Dendritic cell treated with granulocyte-macrophage colony-stimulating factor and Interleukin-4, amounts not matched to agents 40 ng/mL and 50 ng/mL, for 4 days (primary cell): ENCODE measurements at regions of chr16 and their contacts with region 1.

Region 1: GRCh38 chr16:30761928-30762810 is at the starts of genes CFAP119 and RNF40:
- H3K4me3 Mint-ChIP-seq: peak within 1 kb of the TSS; percentile 90
- H3K27ac Mint-ChIP-seq: peak within 1 kb of the TSS; percentile 95
- H3K4me1 Mint-ChIP-seq: peaks cover 59% of the 10 kb centered on the region
- H3K27me3 Mint-ChIP-seq: no peaks in the 10 kb centered on the region

Region 2: DNA sequence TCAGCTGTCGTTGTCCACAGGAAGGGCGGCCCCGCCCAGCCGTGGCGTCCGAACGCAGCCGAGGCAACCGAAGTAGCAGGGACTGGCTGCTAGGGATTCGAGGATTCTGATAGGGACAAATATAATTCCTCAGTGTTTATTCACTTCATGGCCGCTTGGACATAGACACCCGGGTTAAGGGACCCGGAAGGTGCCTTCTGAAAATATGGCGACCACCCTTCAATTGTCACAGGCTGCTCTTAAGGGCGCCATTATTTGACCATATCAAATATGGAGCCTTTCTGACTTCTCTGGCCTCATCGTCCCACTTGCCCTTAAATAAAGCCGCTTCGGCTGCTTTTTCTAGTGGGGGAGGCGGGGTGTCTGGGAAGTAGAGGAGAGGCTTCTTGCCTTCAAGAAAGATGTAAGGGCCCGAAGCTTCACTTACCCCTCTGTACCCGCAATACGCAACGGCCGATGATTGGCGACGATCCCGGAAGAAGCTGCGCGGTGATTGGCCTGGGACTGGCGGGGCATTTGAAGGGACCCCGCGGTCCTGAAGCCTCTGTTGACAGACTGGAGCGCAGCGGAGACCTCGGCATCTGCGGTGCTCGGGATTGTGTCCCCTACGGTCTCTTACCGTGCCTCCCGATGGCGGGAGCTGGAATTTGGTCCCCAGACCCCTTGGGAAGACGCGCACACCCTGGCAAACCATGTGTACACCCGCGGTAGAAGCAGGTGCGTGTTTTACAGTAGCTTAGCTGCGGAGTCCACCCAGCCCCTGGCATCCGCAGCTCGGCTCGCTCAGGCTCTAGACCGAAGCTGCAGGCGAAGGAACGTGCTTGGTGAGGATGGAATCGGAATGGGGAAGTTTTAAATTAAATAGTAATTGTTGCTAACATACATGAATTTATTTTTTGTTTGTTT is 190.2 kb before region 1 on chr16 and contains the start of gene ZNF688:
- intact Hi-C with region 1: no loop called
- H3K4me3 Mint-ChIP-seq: peak within 1 kb of the TSS; percentile 88
- H3K27ac Mint-ChIP-seq: peak within 1 kb of the TSS; percentile 93
- H3K4me1 Mint-ChIP-seq: peaks cover 66% of the 10 kb centered on the region
- H3K27me3 Mint-ChIP-seq: no peaks in the 10 kb centered on the region

Region 3: GRCh38 chr16:30657866-30658730 is 104.1 kb before region 1 on chr16 and contains the start of gene FBRS:
- intact Hi-C with region 1: loop called (anchors 5 kb)
- H3K4me3 Mint-ChIP-seq: peak within 1 kb of the TSS; percentile 98
- H3K27ac Mint-ChIP-seq: peak within 1 kb of the TSS; percentile 100
- H3K4me1 Mint-ChIP-seq: peaks cover 66% of the 10 kb centered on the region
- H3K27me3 Mint-ChIP-seq: no peaks in the 10 kb centered on the region

Region 4: DNA sequence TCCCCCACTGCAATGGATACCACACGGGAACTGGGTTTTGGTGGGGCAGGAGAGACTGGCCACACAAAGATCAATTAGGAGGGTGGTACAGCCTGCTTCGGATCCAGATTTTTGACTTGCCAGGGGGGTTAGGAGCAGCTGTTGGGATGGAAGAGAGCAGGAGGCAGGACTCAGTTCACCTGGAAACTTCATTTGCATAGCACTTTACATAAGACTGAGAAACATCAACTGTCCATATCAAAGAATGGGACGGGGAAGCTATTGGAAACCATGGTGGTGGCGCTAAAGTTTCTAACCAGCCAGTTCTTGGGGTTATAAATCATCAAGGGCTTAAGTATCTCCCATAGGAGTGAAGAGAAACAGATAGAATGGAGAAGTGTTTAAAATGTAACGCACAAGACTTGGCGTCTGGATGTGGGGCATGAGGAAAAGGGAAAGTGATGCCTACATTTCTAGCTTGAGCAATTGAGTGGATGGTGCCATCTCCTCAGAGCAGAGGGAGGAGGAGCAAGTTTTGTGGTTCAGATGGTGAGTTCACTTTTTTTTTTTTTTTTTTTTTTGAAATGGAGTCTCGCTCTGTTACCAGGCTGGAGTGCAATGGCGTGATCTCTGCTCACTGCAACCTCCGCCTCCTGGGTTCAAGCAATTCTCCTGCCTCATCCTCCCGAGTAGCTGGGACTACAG is 69.6 kb before region 1 on chr16:
- intact Hi-C with region 1: no loop called
- H3K4me3 Mint-ChIP-seq: no peak overlapping the region
- H3K27ac Mint-ChIP-seq: peak overlapping the region; percentile 40
- H3K4me1 Mint-ChIP-seq: peaks cover 36% of the 10 kb centered on the region
- H3K27me3 Mint-ChIP-seq: no peaks in the 10 kb centered on the region